ENCODE measurements at regions of chr20 and their contacts with region 1.

Region 1: GRCh38 chr20:3786665-3787323 is at the start of gene CENPB:
- DNase-seq: peak; percentile 83 to 97 (median 92)
- ATAC-seq: peak; percentile 93 to 96 (median 95)
- H3K4me3 ChIP-seq: peak within 1 kb of the TSS; percentile 44 to 66 (median 52)
- H3K27ac ChIP-seq: peak within 1 kb of the TSS; percentile 46 to 65 (median 56)
- H3K4me1 ChIP-seq: peaks cover 10 to 35% (median 17%) of the 10 kb centered on the region in 3 donors
- H3K27me3 ChIP-seq: no peaks in the 10 kb centered on the region
- CTCF ChIP-seq: peak; percentile 56 to 85 (median 71)
- total RNA-seq, gene CENPB: 30.2 to 46.5 (median 39.3) TPM

Region 2: DNA sequence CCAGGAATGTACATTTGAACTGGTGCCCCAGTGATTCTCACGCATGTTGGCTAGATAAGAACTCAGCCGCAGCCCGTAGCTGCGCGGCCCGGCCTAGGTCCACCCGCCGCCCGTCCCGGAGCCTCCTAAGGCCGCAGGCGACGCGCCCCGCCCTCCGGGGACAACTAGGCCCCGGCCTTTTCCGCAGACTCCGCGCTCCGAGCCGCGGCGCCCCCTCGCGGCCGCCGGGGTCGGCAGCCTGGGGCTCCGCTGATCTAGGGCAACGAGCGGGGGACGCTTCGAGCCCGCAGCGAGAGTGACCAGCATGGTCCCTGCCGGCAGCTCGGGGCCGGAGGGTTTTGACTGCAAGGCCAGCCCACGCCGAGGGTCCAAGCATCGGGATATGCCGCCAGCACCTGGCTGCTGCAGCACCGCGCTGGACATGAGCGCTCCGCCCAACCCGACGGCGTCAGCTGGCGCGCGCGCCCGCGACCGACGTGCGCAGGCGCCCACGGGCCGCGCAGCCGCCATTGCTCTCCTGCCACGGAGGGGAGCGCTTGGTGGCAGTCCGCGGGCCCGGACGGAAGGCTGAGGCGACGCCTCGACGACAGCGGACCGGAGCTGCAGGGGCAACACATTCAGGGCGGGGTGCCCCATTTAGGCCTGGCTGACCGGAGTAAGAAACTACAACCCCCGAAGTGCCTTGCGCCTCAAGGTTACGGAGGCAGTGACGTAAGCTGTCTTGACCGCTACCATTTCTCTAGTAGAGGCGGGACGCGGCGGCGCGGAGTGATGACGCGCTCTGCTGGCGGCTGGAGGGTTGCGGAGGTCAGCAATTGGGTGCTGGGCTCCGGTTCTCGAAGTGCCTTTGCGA is 33.5 kb after region 1 on chr20 and contains the start of gene AP5S1:
- intact Hi-C with region 1: loop called in 1 of 3 experiments (anchors 5 kb)
- DNase-seq: peak; percentile 96 to 99 (median 97)
- ATAC-seq: peak; percentile 79 to 91 (median 86)
- H3K4me3 ChIP-seq: peak within 1 kb of the TSS; percentile 51 to 80 (median 65)
- H3K27ac ChIP-seq: peak within 1 kb of the TSS; percentile 98 to 100 (median 98)
- H3K4me1 ChIP-seq: peaks cover 9 to 29% (median 21%) of the 10 kb centered on the region in 3 donors
- H3K27me3 ChIP-seq: no peaks in the 10 kb centered on the region
- CTCF ChIP-seq: peak; percentile 89 to 97 (median 96)
- total RNA-seq, gene AP5S1: 4.7 to 7.9 (median 6.8) TPM

Measured in pancreas (tissue), 10 donors.